ENCODE measurements at regions of chr14 and their contacts with region 1.

Region 1: DNA sequence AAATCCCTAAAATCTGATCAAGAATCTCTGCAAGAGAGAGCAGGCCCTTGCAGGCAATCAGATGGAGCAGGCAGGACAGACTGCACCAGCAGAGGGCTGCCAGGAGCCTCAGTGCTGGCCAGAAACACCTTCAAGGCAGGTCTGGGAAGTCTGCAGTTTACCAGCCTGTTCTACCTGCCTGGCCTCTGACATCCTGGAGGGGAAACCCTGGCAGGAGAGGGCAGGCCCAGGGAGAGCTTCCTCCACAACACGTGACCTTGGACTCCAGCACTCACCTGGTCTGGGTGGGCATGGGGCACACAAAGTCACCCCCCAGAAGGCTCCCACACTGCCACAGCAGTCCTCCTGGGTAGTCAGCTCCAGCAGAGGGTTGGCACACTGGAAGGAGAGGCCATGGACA is 56.0 kb downstream of the ISCA2 start:
- DNase-seq: no peak
- H3K4me3 ChIP-seq: no peak overlapping the region
- H3K27ac ChIP-seq: no peak overlapping the region; a peak in 1 of 4 replicates
- H3K4me1 ChIP-seq: peaks cover 0 to 65% of the 10 kb centered on the region in 2 experiments; a peak in 2 of 4 replicates
- H3K27me3 ChIP-seq: no peaks in the 10 kb centered on the region
- CTCF ChIP-seq: 0 out of 2 replicates have a peak, but pooled peaks have one; percentile 16
- EP300 ChIP-seq: no peak
- RAD21 ChIP-seq: peak; percentile 62

Region 2: DNA sequence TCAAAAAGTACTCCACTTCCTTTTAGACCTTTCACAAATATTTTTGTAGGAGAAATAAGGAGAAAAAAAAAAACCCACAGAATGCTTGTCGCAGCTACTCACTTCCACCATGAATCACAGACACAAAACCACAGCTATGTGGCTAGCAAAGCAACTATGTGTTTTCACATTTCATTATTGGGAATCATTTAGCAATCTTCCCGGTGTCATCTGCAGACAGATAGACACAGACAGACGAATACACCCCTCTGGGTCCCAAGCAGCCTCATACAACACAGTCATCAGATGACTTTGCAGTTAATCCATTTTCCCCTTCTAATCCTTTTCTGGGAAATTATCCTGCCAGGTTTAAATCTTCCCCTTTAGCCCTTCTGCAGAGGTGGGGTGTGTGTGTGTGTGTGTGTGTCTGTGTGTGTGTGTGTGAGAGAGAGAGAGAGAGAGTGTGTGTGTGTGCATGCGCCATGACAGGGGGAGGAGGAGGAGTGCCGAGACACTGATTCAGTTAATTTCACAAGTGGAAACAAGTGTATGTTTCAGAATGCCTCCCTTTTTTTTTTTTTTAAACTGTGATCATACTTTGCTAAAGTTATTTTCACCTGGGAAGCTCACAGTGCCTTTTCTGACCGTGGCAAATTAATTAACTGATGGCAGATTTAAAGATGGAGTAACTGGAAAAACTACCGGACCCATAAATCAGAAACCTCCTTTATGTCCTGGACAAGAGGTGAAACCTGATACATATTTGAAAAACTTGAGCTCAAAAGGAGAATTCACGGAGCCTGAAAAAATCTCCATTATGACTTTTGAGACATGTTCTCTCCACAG is 22.5 kb after region 1 on chr14:
- CTCF ChIA-PET with region 1: interaction called, 31 read pairs
- POLR2A ChIA-PET with region 1: interaction called, 6 read pairs
- DNase-seq: no peak
- H3K4me3 ChIP-seq: peak overlapping the region in 1 of 2 experiments; percentile 35; a peak in 3 of 4 replicates
- H3K27ac ChIP-seq: peak overlapping the region; percentile 92 to 97
- H3K4me1 ChIP-seq: peaks cover 52 to 92% of the 10 kb centered on the region in 2 experiments
- H3K27me3 ChIP-seq: no peaks in the 10 kb centered on the region
- CTCF ChIP-seq: no peak
- EP300 ChIP-seq: peak; percentile 33 to 96; a peak in 3 of 4 replicates
- RAD21 ChIP-seq: no peak

Region 3: GRCh38 chr14:74762917-74763802 is 213.6 kb after region 1 on chr14 and contains the start of gene YLPM1:
- CTCF ChIA-PET with region 1: no interaction called
- POLR2A ChIA-PET with region 1: no interaction called
- DNase-seq: peak; percentile 94
- H3K4me3 ChIP-seq: peak within 1 kb of the TSS; percentile 83 to 90
- H3K27ac ChIP-seq: peak within 1 kb of the TSS; percentile 84 to 92
- H3K4me1 ChIP-seq: peaks cover 0 to 4% of the 10 kb centered on the region in 2 experiments; a peak in 3 of 4 replicates
- H3K27me3 ChIP-seq: no peaks in the 10 kb centered on the region
- CTCF ChIP-seq: peak; percentile 61
- EP300 ChIP-seq: peak in 1 of 2 experiments; percentile 57; a peak in 2 of 4 replicates
- RAD21 ChIP-seq: no peak
- polyA plus RNA-seq, gene YLPM1: 9.4 and 14.0 TPM in 2 replicates

Measured in SK-N-SH (cell line).